ENCODE measurements at regions of chr10 and their contacts with region 1.

Region 1: DNA sequence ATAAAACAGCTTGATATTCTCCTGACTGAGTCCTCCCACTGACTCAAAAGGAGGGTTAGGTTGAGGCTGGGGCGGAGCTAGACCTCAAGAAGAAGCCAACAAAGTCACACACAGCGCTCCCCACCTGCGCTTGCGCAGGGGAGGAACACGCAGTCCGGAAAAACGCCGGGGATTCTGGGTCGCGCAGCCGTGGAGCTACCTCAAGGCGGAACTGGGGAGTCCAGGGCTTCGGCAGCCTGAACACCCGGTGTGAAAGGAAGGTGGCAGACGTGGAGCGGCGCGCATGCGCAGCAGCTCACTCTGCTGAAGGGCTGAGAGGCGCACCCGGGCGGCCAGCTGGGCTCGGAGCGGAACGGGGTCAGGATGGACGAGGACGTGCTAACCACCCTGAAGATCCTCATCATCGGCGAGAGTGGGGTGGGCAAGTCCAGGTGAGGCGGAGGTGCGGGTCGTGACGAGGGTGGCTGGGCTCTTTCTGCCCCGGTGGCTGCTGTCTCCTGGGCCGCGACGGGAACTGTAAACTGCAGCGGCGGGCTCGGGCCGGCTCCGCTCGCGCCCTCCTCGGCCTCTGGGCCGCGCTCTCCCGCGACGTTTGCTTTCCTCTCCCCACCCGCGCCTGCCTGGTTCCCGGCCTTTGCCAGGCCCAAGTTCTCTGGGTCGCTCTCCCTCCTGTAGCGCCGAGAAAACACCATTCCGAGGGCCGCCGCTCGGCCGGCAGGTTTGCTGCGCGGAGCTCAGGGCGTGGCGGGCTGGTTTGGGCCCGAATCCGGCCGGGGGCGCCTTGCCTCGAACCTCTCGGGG is at the start of gene RAB18:
- DNase-seq: peak; percentile 99
- total RNA-seq, gene RAB18: 113 TPM

Region 2: DNA sequence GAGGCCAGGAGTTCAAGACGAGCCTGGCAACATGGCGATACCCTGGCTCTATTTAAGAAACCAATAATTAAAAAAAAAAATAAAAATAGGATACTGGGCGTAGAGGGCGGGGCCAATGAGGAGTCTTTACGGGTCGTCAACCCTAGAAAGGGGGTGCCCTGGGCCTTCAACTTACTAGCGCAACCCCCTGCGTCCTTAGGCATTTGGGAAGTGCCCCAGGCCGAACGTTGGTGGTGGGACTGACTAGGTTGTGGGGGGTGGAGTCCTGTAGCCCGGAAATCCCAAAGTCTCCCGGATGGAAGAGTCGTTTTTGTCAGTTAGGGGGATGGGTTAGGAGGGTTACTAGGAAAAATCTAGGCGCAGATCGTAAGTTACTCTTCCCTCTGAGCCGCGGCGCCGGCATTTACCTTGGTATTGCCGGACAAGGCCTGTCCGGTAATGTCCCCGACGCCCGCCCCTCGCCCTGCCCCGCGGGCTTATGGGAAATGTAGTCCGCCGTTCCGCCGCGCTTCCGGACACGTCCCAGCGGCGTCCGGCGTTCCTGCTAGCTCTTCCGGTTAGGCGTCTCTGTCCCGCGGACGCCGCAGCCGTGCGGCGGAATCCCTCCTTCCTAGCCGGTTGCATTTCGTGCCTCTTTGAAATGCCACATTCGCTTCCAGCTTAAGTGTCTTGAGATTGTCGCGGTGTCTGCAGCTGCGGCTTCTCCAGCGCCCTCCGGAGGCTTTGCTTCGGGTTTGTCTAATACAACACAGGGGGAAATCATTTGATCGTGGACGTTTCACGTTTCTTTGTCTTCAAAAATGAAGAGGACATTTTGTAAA is 262.3 kb before region 1 on chr10:
- intact Hi-C with region 1: loop called (anchors 5 kb)
- DNase-seq: peak; percentile 97

Region 3: GRCh38 chr10:27474741-27475140 is 29.5 kb before region 1 on chr10:
- intact Hi-C with region 1: no loop called
- DNase-seq: no peak

Region 4: DNA sequence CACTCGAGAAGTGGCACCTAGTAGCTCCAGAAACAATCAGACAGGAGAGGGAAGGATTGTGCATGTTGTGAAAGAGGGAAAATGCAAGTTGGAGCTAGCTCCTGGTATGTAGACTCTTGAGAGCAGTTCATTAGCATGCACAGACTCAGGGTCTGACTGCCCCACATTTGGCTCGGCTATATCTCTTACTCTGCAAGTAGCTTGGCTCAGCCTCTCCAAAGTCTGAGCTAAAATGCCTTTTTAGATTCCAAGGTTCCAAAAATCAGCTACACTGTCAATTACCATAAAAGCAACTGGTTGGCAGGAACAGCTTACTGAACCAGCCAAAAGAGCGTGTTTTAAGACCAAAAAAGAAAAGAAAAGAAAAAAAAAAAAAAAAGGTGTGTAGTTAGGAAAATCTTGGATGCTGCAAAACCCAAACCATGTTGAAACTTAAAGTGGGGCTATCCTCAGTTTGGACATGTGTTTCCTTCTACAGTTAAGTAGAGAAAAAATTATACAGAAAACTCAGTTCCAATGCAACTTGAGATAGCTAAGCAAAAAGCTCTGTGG is 175.9 kb after region 1 on chr10:
- intact Hi-C with region 1: no loop called
- DNase-seq: no peak

Measured in cardiac septum (tissue), 1 donor.